ENCODE measurements at regions of chr11 and their contacts with region 1.

Region 1: GRCh38 chr11:46238967-46239800 is 38.3 kb upstream of the CREB3L1 start:
- DNase-seq: peak; percentile 68 to 74
- H3K4me3 ChIP-seq: peak overlapping the region; percentile 38 to 79 (median 59)
- H3K27ac ChIP-seq: peak overlapping the region in 1 of 2 donors; percentile 86
- H3K4me1 ChIP-seq: peaks cover 0 to 9% of the 10 kb centered on the region in 2 donors
- H3K27me3 ChIP-seq: no peaks in the 10 kb centered on the region
- CTCF ChIP-seq: peak; percentile 85 to 98 (median 96)
- POLR2A ChIP-seq: no peak

Region 2: GRCh38 chr11:46315033-46315738 is 76.0 kb after region 1 on chr11:
- intact Hi-C with region 1: loop called (anchors 10 kb)
- DNase-seq: peak in 1 of 2 donors; percentile 65
- H3K4me3 ChIP-seq: no peak overlapping the region
- H3K27ac ChIP-seq: no peak overlapping the region
- H3K4me1 ChIP-seq: no peaks in the 10 kb centered on the region
- H3K27me3 ChIP-seq: no peaks in the 10 kb centered on the region
- CTCF ChIP-seq: peak; percentile 58 to 85 (median 73)
- POLR2A ChIP-seq: no peak